MCF 10A (cell line): ENCODE measurements at regions of chr16 and their contacts with region 1.

Region 1: GRCh38 chr16:66928702-66929388 is 3.5 kb upstream of the RRAD start:
- DNase-seq: peak; percentile 52
- H3K4me3 Mint-ChIP-seq: no peak overlapping the region
- H3K27ac Mint-ChIP-seq: peak overlapping the region; percentile 69
- H3K4me1 Mint-ChIP-seq: peaks cover 46% of the 10 kb centered on the region
- H3K27me3 Mint-ChIP-seq: no peaks in the 10 kb centered on the region
- CTCF ChIP-seq: peak; percentile 30

Region 2: GRCh38 chr16:65534121-65534528 is 1394.7 kb before region 1 on chr16:
- CTCF ChIA-PET with region 1: no interaction called
- POLR2A ChIA-PET with region 1: no interaction called
- intact Hi-C with region 1: no loop called
- DNase-seq: peak; percentile 14
- H3K4me3 Mint-ChIP-seq: no peak overlapping the region
- H3K27ac Mint-ChIP-seq: no peak overlapping the region
- H3K4me1 Mint-ChIP-seq: no peaks in the 10 kb centered on the region
- H3K27me3 Mint-ChIP-seq: no peaks in the 10 kb centered on the region
- CTCF ChIP-seq: no peak

Region 3: GRCh38 chr16:66911112-66911511 is 17.7 kb before region 1 on chr16:
- CTCF ChIA-PET with region 1: interaction called, 11 read pairs
- POLR2A ChIA-PET with region 1: interaction called, 7 read pairs
- intact Hi-C with region 1: no loop called
- DNase-seq: peak; percentile 74
- H3K4me3 Mint-ChIP-seq: no peak overlapping the region
- H3K27ac Mint-ChIP-seq: no peak overlapping the region
- H3K4me1 Mint-ChIP-seq: peaks cover 14% of the 10 kb centered on the region
- H3K27me3 Mint-ChIP-seq: no peaks in the 10 kb centered on the region
- CTCF ChIP-seq: no peak

Region 4: GRCh38 chr16:67697422-67698185 is 768.8 kb after region 1 on chr16:
- CTCF ChIA-PET with region 1: no interaction called
- POLR2A ChIA-PET with region 1: no interaction called
- intact Hi-C with region 1: no loop called
- DNase-seq: no peak
- H3K4me3 Mint-ChIP-seq: no peak overlapping the region
- H3K27ac Mint-ChIP-seq: no peak overlapping the region
- H3K4me1 Mint-ChIP-seq: no peaks in the 10 kb centered on the region
- H3K27me3 Mint-ChIP-seq: no peaks in the 10 kb centered on the region
- CTCF ChIP-seq: no peak